ENCODE measurements at regions of chr12 and their contacts with region 1.

Region 1: GRCh38 chr12:9869307-9870161 is at the start of gene CLEC2B:
- DNase-seq: peak; percentile 37
- H3K4me3 Mint-ChIP-seq: peak within 1 kb of the TSS; percentile 91
- H3K27ac Mint-ChIP-seq: peak within 1 kb of the TSS; percentile 98
- H3K4me1 Mint-ChIP-seq: peaks cover 22% of the 10 kb centered on the region
- H3K27me3 Mint-ChIP-seq: no peaks in the 10 kb centered on the region
- total RNA-seq, gene CLEC2B: 30.3 to 30.7 TPM

Region 2: GRCh38 chr12:9244894-9245293 is 624.6 kb before region 1 on chr12:
- CTCF ChIA-PET with region 1: no interaction called
- intact Hi-C with region 1: loop called (anchors 2 kb)
- DNase-seq: peak; percentile 87
- H3K4me3 Mint-ChIP-seq: no peak overlapping the region
- H3K27ac Mint-ChIP-seq: peak overlapping the region; percentile 79
- H3K4me1 Mint-ChIP-seq: peaks cover 49% of the 10 kb centered on the region
- H3K27me3 Mint-ChIP-seq: peaks cover 9% of the 10 kb centered on the region

Region 3: GRCh38 chr12:9642606-9643265 is 226.8 kb before region 1 on chr12:
- CTCF ChIA-PET with region 1: no interaction called
- intact Hi-C with region 1: no loop called
- DNase-seq: no peak
- H3K4me3 Mint-ChIP-seq: peak overlapping the region; percentile 10
- H3K27ac Mint-ChIP-seq: peak overlapping the region; percentile 22
- H3K4me1 Mint-ChIP-seq: peaks cover 60% of the 10 kb centered on the region
- H3K27me3 Mint-ChIP-seq: no peaks in the 10 kb centered on the region

Region 4: GRCh38 chr12:9750276-9751203 is 119.0 kb before region 1 on chr12:
- CTCF ChIA-PET with region 1: interaction called, 5 read pairs
- intact Hi-C with region 1: loop called (anchors 2 kb)
- DNase-seq: peak; percentile 68
- H3K4me3 Mint-ChIP-seq: peak overlapping the region; percentile 74
- H3K27ac Mint-ChIP-seq: peak overlapping the region; percentile 71
- H3K4me1 Mint-ChIP-seq: peaks cover 44% of the 10 kb centered on the region
- H3K27me3 Mint-ChIP-seq: no peaks in the 10 kb centered on the region

Region 5: DNA sequence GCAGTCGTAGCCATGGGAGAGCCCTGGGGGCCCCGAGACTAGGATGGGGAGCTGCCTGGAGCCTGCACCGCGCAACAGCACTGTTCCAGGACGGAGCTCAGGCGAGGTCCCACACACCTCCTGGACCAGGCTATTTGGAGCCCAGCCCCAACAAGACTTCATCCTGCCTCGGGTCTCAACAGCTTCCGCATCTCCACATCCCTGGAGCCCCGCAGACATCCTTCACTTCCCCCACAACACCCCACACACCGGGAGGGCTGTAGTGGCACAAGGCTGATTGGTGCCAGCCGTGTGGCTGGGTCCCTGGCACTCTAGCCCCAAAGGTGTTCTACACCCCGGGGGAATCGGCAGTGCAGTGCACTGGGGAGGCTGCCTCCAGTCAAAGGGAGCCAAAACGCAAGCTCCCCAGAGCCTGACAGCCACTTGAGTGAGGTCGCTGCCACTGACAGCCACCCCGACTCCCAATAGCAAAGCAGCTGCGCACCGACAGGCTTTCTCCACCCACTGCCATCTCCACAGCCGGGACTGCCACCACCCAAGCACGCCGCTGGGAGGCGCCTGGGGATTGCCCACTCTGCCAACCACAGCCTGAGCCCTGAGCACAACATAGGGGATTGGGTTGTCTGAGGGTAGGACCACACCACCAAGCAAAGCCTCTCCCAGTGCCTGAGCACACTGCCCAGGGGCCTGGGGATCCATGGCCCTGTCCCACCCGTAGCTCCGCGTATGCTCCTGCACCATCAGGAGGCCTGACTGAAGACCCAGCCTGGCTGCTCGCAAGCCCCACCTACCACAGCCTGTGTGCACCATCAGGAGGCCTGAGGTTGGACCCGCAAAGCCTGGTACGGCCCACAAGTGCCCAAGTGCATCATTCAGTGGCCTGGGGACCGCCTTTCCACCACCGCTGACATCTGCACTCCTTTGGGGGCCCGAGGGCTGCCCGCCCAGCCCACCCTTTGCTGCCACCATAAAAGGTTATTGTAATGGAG is 55.4 kb before region 1 on chr12:
- CTCF ChIA-PET with region 1: interaction called, 11 read pairs
- intact Hi-C with region 1: loop called (anchors 5 kb)
- DNase-seq: peak; percentile 93
- H3K4me3 Mint-ChIP-seq: peak overlapping the region; percentile 77
- H3K27ac Mint-ChIP-seq: no peak overlapping the region
- H3K4me1 Mint-ChIP-seq: peaks cover 9% of the 10 kb centered on the region
- H3K27me3 Mint-ChIP-seq: no peaks in the 10 kb centered on the region

Region 6: GRCh38 chr12:9940375-9940774 is 70.8 kb after region 1 on chr12:
- CTCF ChIA-PET with region 1: interaction called, 7 read pairs
- intact Hi-C with region 1: loop called (anchors 1 kb)
- DNase-seq: peak; percentile 28
- H3K4me3 Mint-ChIP-seq: no peak overlapping the region
- H3K27ac Mint-ChIP-seq: no peak overlapping the region
- H3K4me1 Mint-ChIP-seq: peaks cover 23% of the 10 kb centered on the region
- H3K27me3 Mint-ChIP-seq: no peaks in the 10 kb centered on the region

Region 7: DNA sequence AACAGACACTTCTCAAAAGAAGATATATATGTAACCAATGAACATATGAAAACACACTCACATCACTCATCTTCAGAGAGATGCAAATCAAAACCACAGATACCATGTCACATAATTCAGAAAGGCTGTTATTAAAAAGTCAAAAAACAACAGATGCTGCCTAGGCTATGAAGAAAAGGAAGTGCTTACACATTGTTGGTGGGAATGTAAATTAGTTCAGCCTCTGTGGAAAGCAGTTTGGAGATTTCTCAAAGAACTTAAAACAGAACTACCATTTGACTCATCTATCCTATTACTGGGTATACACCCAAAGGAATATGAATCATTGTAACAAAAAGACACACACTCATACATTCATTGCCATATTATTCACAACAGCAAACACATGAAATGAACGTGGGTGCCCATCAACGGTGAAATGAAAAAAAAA is 671.3 kb after region 1 on chr12:
- CTCF ChIA-PET with region 1: no interaction called
- intact Hi-C with region 1: loop called (anchors 5 kb)
- DNase-seq: no peak
- H3K4me3 Mint-ChIP-seq: no peak overlapping the region
- H3K27ac Mint-ChIP-seq: peak overlapping the region; percentile 22
- H3K4me1 Mint-ChIP-seq: peaks cover 15% of the 10 kb centered on the region
- H3K27me3 Mint-ChIP-seq: peaks cover 36% of the 10 kb centered on the region

Measured in activated naive CD4-positive, alpha-beta T cell treated with anti-CD3 and anti-CD28 coated beads for 36 hours (primary cell).